CD8-positive, alpha-beta T cell (primary cell): ENCODE measurements at regions of chr1 and their contacts with region 1.

Region 1: GRCh38 chr1:15526490-15527339 is at the start of gene DNAJC16:
- DNase-seq: peak; percentile 90 to 99 (median 96)
- ATAC-seq: peak; percentile 18
- H3K4me3 ChIP-seq: peak within 1 kb of the TSS; percentile 63 to 86
- H3K4me3 Mint-ChIP-seq: peak within 1 kb of the TSS; percentile 95
- H3K27ac ChIP-seq: peak within 1 kb of the TSS; percentile 79 to 100
- H3K27ac Mint-ChIP-seq: peak within 1 kb of the TSS; percentile 100
- H3K4me1 ChIP-seq: peaks cover 34% of the 10 kb centered on the region
- H3K4me1 Mint-ChIP-seq: peaks cover 56% of the 10 kb centered on the region
- H3K27me3 ChIP-seq: no peaks in the 10 kb centered on the region
- H3K27me3 Mint-ChIP-seq: no peaks in the 10 kb centered on the region
- CTCF ChIP-seq: no peak
- total RNA-seq, gene DNAJC16: 7.9 to 8.5 TPM

Region 2: DNA sequence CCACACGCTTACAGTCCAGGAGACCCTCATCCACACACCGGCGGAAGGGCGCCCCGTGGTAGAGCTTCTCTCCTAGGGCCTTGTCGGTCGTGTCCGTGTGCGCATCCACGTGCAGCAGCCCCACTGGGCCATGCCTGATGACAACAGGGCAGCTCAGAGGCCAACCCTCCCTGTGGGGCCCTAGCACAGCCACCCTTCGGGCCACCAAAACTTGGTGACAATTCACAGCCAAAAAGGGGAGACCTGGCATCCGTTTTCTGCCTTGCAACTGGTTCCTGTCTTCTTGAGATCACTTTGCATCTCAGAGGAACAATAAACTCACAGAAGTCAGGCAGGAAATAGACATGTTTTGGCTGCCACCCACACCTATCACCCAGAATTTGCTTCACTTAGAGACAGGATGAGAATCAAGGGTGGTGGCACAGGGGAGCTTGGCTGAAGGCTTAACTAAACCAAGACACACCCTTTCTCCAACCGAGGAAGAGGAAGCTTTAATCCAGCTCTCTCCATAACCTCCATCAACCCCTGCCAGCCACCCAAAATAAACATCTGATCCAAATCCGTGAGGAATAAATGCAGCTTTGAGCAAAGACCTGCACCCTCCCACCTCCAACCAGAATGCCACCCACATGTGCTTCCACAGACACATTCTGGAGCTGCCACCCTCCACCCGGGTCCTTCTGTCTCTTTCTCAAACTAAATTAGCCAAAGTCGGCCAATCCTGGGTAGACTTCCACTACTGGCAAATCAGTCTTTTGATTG is 52.4 kb after region 1 on chr1:
- CTCF ChIA-PET with region 1: no interaction called
- POLR2A ChIA-PET with region 1: interaction called, 13 read pairs
- intact Hi-C with region 1: loop called (anchors 1 to 5 kb)
- DNase-seq: peak; percentile 17 to 76 (median 42)
- ATAC-seq: peak; percentile 87
- H3K4me3 ChIP-seq: peak overlapping the region in 1 of 2 experiments; percentile 29
- H3K4me3 Mint-ChIP-seq: peak overlapping the region; percentile 69
- H3K27ac ChIP-seq: peak overlapping the region; percentile 55 to 81
- H3K27ac Mint-ChIP-seq: peak overlapping the region; percentile 94
- H3K4me1 ChIP-seq: peaks cover 49% of the 10 kb centered on the region
- H3K4me1 Mint-ChIP-seq: peaks cover 50% of the 10 kb centered on the region
- H3K27me3 ChIP-seq: no peaks in the 10 kb centered on the region
- H3K27me3 Mint-ChIP-seq: no peaks in the 10 kb centered on the region
- CTCF ChIP-seq: no peak

Region 3: DNA sequence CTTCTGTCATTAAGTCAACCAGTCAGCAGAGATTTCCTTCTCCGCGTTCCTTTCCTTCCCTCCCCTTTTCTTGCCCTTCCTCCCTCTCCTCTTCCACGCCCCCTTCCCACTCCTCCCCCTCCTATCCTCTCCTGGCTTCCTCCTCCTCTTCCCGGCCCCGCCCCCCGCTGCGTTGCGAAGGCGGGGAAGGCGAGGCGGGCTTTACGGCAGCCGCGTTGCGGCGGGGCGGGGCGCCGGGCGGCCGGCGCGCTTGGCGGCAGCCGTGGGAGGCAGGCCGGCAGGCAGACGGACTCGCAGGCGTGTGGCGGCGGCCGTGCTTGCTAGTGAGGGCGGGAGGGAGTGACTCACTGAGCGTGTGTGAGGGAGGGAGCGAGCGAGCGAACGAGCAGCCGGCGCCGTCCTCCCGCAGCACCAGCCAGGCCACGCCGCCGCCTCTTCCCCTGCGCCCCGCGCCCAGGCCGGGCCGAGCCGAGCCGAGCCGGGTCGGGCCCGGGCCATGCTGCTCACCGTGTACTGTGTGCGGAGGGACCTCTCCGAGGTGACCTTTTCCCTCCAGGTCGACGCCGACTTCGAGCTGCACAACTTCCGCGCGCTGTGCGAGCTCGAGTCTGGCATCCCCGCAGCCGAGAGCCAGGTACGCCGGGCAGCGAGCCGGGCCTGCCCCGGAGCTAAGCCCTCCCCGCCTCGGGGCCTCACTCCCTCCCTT is 90.6 kb after region 1 on chr1 and contains the start of gene DDI2:
- CTCF ChIA-PET with region 1: no interaction called
- POLR2A ChIA-PET with region 1: interaction called, 5 read pairs
- intact Hi-C with region 1: loop called (anchors 1 kb)
- DNase-seq: peak; percentile 83 to 96 (median 92)
- ATAC-seq: peak; percentile 88
- H3K4me3 ChIP-seq: peak within 1 kb of the TSS; percentile 83 to 89
- H3K4me3 Mint-ChIP-seq: peak within 1 kb of the TSS; percentile 94
- H3K27ac ChIP-seq: peak within 1 kb of the TSS; percentile 73 to 91
- H3K27ac Mint-ChIP-seq: peak within 1 kb of the TSS; percentile 94
- H3K4me1 ChIP-seq: peaks cover 44% of the 10 kb centered on the region
- H3K4me1 Mint-ChIP-seq: peaks cover 46% of the 10 kb centered on the region
- H3K27me3 ChIP-seq: no peaks in the 10 kb centered on the region
- H3K27me3 Mint-ChIP-seq: no peaks in the 10 kb centered on the region
- CTCF ChIP-seq: no peak
- total RNA-seq, gene DDI2: 34.7 to 37.7 TPM

Region 4: GRCh38 chr1:15847100-15847892 is 320.6 kb after region 1 on chr1 and contains the start of gene SPEN:
- CTCF ChIA-PET with region 1: no interaction called
- POLR2A ChIA-PET with region 1: no interaction called
- intact Hi-C with region 1: loop called (anchors 1 to 2 kb)
- DNase-seq: peak; percentile 95 to 99 (median 99)
- ATAC-seq: peak; percentile 80
- H3K4me3 ChIP-seq: peak within 1 kb of the TSS; percentile 96 to 99
- H3K4me3 Mint-ChIP-seq: peak within 1 kb of the TSS; percentile 98
- H3K27ac ChIP-seq: peak within 1 kb of the TSS; percentile 91 to 93
- H3K27ac Mint-ChIP-seq: peak within 1 kb of the TSS; percentile 97
- H3K4me1 ChIP-seq: peaks cover 24% of the 10 kb centered on the region
- H3K4me1 Mint-ChIP-seq: peaks cover 36% of the 10 kb centered on the region
- H3K27me3 ChIP-seq: no peaks in the 10 kb centered on the region
- H3K27me3 Mint-ChIP-seq: no peaks in the 10 kb centered on the region
- CTCF ChIP-seq: no peak
- total RNA-seq, gene SPEN: 85.9 to 87.3 TPM

Region 5: GRCh38 chr1:16206547-16207317 is 680.0 kb after region 1 on chr1:
- CTCF ChIA-PET with region 1: no interaction called
- POLR2A ChIA-PET with region 1: no interaction called
- intact Hi-C with region 1: loop called (anchors 1 to 2 kb)
- DNase-seq: peak; percentile 84 to 97 (median 93)
- ATAC-seq: peak; percentile 86
- H3K4me3 ChIP-seq: peak overlapping the region; percentile 68 to 83
- H3K4me3 Mint-ChIP-seq: peak overlapping the region; percentile 93
- H3K27ac ChIP-seq: peak overlapping the region; percentile 69 to 87
- H3K27ac Mint-ChIP-seq: peak overlapping the region; percentile 95
- H3K4me1 ChIP-seq: peaks cover 14% of the 10 kb centered on the region
- H3K4me1 Mint-ChIP-seq: peaks cover 10% of the 10 kb centered on the region
- H3K27me3 ChIP-seq: no peaks in the 10 kb centered on the region
- H3K27me3 Mint-ChIP-seq: no peaks in the 10 kb centered on the region
- CTCF ChIP-seq: no peak

Region 6: DNA sequence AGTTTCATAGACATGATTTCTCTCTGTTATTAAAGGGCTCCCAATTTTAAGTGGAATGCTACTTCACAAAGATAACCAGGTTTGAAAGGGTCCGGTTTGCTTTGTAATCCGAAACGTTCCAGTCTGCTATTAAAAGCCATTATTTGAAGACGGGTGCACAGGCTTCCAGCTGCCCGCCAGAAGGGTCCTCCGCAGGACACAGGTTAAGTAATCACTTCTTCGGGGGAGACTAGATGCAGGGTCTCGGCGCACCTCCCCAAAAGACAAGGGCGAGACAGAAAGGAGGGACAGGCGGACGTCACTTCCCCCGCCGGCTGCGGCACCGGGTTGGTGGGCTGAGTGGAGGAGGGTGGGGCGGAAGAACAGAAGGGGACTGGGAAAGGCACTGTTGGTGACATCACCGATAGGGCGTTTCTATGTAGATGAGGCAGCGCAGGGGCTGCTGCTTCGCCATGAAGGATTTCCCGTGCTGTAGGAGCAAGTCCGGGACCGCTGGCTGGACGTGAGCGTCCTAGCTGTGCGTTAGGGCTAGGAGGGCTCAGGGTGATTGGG is 1377.9 kb after region 1 on chr1:
- CTCF ChIA-PET with region 1: no interaction called
- POLR2A ChIA-PET with region 1: no interaction called
- intact Hi-C with region 1: loop called in 1 of 2 experiments (anchors 10 kb)
- DNase-seq: peak; percentile 97 to 100 (median 99)
- ATAC-seq: peak; percentile 95
- H3K4me3 ChIP-seq: peak overlapping the region; percentile 50
- H3K4me3 Mint-ChIP-seq: no peak overlapping the region
- H3K27ac ChIP-seq: peak overlapping the region; percentile 97 to 99
- H3K27ac Mint-ChIP-seq: no peak overlapping the region
- H3K4me1 ChIP-seq: peaks cover 44% of the 10 kb centered on the region
- H3K4me1 Mint-ChIP-seq: peaks cover 32% of the 10 kb centered on the region
- H3K27me3 ChIP-seq: no peaks in the 10 kb centered on the region
- H3K27me3 Mint-ChIP-seq: no peaks in the 10 kb centered on the region
- CTCF ChIP-seq: no peak

Region 7: GRCh38 chr1:17053685-17054410 is 1527.1 kb after region 1 on chr1 and contains the start of gene SDHB:
- CTCF ChIA-PET with region 1: no interaction called
- POLR2A ChIA-PET with region 1: no interaction called
- intact Hi-C with region 1: loop called in 1 of 2 experiments (anchors 5 kb)
- DNase-seq: peak; percentile 97 to 100 (median 99)
- ATAC-seq: peak; percentile 98
- H3K4me3 ChIP-seq: peak within 1 kb of the TSS; percentile 53 to 90
- H3K4me3 Mint-ChIP-seq: peak within 1 kb of the TSS; percentile 99
- H3K27ac ChIP-seq: peak within 1 kb of the TSS; percentile 67 to 84
- H3K27ac Mint-ChIP-seq: peak within 1 kb of the TSS; percentile 98
- H3K4me1 ChIP-seq: peaks cover 16% of the 10 kb centered on the region
- H3K4me1 Mint-ChIP-seq: peaks cover 33% of the 10 kb centered on the region
- H3K27me3 ChIP-seq: no peaks in the 10 kb centered on the region
- H3K27me3 Mint-ChIP-seq: peaks cover 6% of the 10 kb centered on the region
- CTCF ChIP-seq: no peak
- total RNA-seq, gene SDHB: 66.2 to 71.8 TPM